H1 (cell line): ENCODE measurements at regions of chr20 and their contacts with region 1.

Region 1: GRCh38 chr20:2108987-2109386 is 7.4 kb downstream of the STK35 start:
- DNase-seq: no peak
- H3K4me3 ChIP-seq: no peak overlapping the region
- H3K27ac ChIP-seq: no peak overlapping the region
- H3K4me1 ChIP-seq: peaks cover 0 to 4% (median under 1%) of the 10 kb centered on the region in 4 experiments; a peak in 3 of 7 replicates
- H3K27me3 ChIP-seq: no peaks in the 10 kb centered on the region
- CTCF ChIP-seq: no peak
- EP300 ChIP-seq: no peak
- POLR2A ChIP-seq: no peak
- RAD21 ChIP-seq: no peak

Region 2: DNA sequence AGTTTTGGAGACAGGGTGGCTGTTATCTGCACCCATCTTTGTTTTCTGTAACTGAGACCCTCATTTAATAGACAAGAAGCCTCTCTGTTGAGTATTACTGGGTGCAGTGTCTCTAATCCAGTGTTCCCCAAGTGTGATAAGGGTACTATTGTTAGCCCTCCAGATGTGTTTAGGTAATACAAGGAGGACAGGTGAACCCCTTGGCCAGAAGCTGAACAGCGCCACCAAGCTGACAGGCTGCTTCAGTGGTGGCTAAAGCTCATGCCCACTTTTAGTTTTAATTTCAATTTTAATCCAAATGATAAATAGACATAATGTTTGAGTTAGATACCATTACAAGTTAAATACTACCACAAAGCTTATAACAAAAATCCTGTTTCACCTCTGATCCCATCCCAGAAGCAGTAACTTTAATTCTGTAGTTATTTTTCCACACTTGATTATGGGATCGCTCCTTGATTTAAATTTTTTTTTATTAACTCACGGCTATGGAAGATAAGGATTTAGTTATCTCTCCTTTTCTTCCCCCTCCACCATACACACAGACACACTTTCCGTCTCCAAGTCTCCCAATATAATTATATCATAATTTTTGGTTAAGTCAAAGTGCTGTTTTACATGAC is 15.7 kb before region 1 on chr20:
- CTCF ChIA-PET with region 1: interaction called, 25 read pairs
- POLR2A ChIA-PET with region 1: no interaction called
- DNase-seq: peak in 1 of 2 experiments; percentile 58
- H3K4me3 ChIP-seq: no peak overlapping the region
- H3K27ac ChIP-seq: no peak overlapping the region
- H3K4me1 ChIP-seq: peaks cover 0 to 10% (median 7%) of the 10 kb centered on the region in 4 experiments; a peak in 4 of 7 replicates
- H3K27me3 ChIP-seq: no peaks in the 10 kb centered on the region; a peak in 1 of 7 replicates
- CTCF ChIP-seq: peak; percentile 82 to 89 (median 86)
- EP300 ChIP-seq: no peak
- POLR2A ChIP-seq: no peak
- RAD21 ChIP-seq: peak; percentile 91 to 94

Region 3: DNA sequence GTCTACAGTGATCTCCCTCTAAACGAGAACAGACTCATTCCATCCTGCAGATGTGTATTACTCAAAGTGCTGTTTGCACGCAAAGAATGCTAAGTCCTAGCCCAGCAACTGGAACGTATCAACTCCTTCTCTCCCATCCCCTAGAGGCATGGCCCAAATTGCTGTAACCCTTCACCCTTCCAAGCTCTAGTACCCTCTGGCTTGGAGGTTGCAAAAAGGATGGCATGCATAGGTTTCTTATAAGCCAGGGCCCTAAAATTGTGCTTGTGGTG is 115.3 kb after region 1 on chr20:
- CTCF ChIA-PET with region 1: no interaction called
- POLR2A ChIA-PET with region 1: no interaction called
- DNase-seq: no peak
- H3K4me3 ChIP-seq: no peak overlapping the region
- H3K27ac ChIP-seq: no peak overlapping the region
- H3K4me1 ChIP-seq: no peaks in the 10 kb centered on the region
- H3K27me3 ChIP-seq: no peaks in the 10 kb centered on the region
- CTCF ChIP-seq: no peak
- EP300 ChIP-seq: no peak
- POLR2A ChIP-seq: no peak
- RAD21 ChIP-seq: no peak